Uterus (tissue), 4 donors: ENCODE measurements at regions of chr10 and their contacts with region 1.

Region 1: GRCh38 chr10:98168147-98168546 is 33.7 kb downstream of the R3HCC1L start:
- DNase-seq: no peak
- H3K4me3 ChIP-seq: no peak overlapping the region
- H3K27ac ChIP-seq: no peak overlapping the region
- H3K4me1 ChIP-seq: no peaks in the 10 kb centered on the region
- H3K27me3 ChIP-seq: no peaks in the 10 kb centered on the region
- CTCF ChIP-seq: no peak
- POLR2A ChIP-seq: no peak

Region 2: GRCh38 chr10:98309366-98310355 is 141.5 kb after region 1 on chr10:
- intact Hi-C with region 1: loop called (anchors 10 kb)
- DNase-seq: peak; percentile 76 to 84
- H3K4me3 ChIP-seq: no peak overlapping the region
- H3K27ac ChIP-seq: peak overlapping the region in 1 of 2 donors; percentile 34
- H3K4me1 ChIP-seq: no peaks in the 10 kb centered on the region
- H3K27me3 ChIP-seq: no peaks in the 10 kb centered on the region
- CTCF ChIP-seq: peak; percentile 79 to 92 (median 86)
- POLR2A ChIP-seq: no peak